ENCODE measurements at regions of chr13 and their contacts with region 1.

Region 1: GRCh38 chr13:95862401-95862800 is 185.5 kb downstream of the DNAJC3 start:
- DNase-seq: no peak
- H3K4me3 ChIP-seq: no peak overlapping the region
- H3K27ac ChIP-seq: no peak overlapping the region
- H3K4me1 ChIP-seq: no peaks in the 10 kb centered on the region
- H3K27me3 ChIP-seq: no peaks in the 10 kb centered on the region
- CTCF ChIP-seq: no peak

Region 2: DNA sequence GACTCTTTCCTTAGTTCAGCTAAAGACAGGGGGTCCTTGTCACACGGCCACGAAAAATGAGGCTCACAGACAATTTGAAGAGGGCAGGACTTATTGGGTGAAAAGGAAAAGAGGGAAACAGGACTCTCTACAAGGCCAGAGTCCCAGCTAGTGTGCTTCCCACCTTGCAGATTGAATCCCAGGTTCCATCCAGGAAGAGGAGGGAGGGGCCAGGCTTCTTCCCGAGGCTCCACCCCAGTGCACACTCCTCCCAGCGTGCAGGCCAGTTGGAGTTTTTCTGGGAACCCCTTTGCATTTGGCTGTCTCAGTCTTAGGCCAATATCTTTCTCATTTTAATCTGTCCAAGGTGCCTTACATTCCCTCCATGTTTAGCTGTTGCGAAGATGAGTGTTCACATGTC is 78.7 kb before region 1 on chr13:
- CTCF ChIA-PET with region 1: no interaction called
- dilution Hi-C with region 1: no loop called
- in situ Hi-C with region 1: no loop called
- intact Hi-C with region 1: no loop called
- DNase-seq: no peak
- H3K4me3 ChIP-seq: no peak overlapping the region
- H3K27ac ChIP-seq: no peak overlapping the region
- H3K4me1 ChIP-seq: peaks cover 11% of the 10 kb centered on the region
- H3K27me3 ChIP-seq: no peaks in the 10 kb centered on the region
- CTCF ChIP-seq: no peak

Region 3: DNA sequence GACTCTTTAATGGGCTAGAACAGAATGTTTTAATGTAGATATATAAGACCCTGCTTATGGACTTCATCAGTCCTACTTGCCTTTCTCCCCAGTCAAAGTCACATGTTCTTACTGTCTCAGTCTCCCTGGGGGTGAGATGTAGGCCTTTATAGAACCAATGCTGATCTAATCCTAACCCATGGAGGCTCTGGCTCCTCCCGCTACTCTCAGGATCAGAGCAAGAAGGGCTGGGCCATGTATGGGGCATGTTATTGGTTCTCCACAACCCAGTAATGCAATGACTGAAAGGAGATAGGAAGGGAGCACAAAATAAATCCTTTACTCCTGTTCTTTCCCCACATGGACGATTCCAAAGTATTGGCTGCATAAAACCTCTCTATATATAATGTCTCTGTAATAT is 108.5 kb after region 1 on chr13:
- CTCF ChIA-PET with region 1: no interaction called
- dilution Hi-C with region 1: no loop called
- in situ Hi-C with region 1: no loop called
- intact Hi-C with region 1: loop called (anchors 10 kb)
- DNase-seq: no peak
- H3K4me3 ChIP-seq: no peak overlapping the region
- H3K27ac ChIP-seq: no peak overlapping the region
- H3K4me1 ChIP-seq: no peaks in the 10 kb centered on the region
- H3K27me3 ChIP-seq: no peaks in the 10 kb centered on the region
- CTCF ChIP-seq: no peak

Region 4: DNA sequence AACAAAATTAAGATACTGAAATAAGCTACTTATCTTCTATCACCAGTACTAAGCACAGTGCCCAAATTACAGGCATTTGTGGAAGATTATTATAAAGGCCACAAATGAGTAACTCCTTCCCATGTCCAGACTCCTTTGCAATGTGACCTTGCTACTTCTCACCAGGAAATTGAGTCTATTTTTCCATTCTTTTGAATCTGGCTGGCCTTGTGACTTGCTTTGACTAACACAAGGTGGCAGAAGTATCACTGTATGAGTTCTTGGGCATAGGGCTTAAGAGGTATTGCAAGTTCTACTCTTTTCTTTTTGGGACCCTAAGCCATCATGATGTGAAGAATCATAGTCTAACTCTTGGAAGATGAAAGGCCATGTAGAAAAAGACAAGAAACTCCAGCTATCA is 140.9 kb after region 1 on chr13:
- CTCF ChIA-PET with region 1: no interaction called
- dilution Hi-C with region 1: no loop called
- in situ Hi-C with region 1: no loop called
- intact Hi-C with region 1: no loop called
- DNase-seq: peak; percentile 5
- H3K4me3 ChIP-seq: no peak overlapping the region
- H3K27ac ChIP-seq: no peak overlapping the region
- H3K4me1 ChIP-seq: no peaks in the 10 kb centered on the region
- H3K27me3 ChIP-seq: no peaks in the 10 kb centered on the region
- CTCF ChIP-seq: peak in 1 of 2 donors; percentile 16

Measured in mammary epithelial cell (primary cell).